SK-N-SH (cell line): ENCODE measurements at regions of chr16 and their contacts with region 1.

Region 1: DNA sequence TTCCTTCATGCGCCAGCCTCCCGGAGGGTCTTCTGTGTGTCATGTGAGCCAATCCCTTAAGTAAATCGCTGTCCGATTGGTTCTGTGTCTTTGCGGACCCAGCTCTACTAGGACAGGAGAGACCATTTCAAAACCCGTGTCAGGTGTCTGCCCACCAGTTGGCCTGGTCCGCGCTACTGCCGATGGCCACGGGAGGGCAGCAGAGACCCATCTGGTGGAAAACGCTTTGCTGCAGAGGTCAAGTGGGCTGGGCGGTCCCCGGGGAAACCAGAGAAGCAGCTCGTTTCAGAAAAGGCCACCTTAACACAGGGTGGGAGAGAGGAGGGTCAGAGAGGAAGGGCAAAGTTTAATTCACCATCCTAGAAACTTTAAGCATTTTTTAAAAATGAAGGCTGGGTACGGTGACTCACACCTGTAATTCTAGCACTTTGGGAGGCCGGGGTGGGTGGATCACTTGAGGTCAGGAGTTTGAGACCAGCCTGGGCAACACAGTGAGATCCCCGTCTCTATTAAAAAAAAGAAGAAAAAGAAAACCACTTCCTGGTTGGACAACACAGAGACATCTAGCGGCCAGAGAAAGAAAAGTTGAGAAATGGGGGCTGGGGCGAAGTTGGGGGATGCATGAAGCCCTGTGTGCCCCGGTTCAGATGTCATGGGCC is 2.8 kb upstream of the CIBAR2 start:
- DNase-seq: peak; percentile 92
- H3K4me3 ChIP-seq: peak overlapping the region in 1 of 2 experiments; percentile 39; a peak in 1 of 4 replicates
- H3K27ac ChIP-seq: peak overlapping the region; percentile 45 to 61; a peak in 3 of 4 replicates
- H3K4me1 ChIP-seq: peaks cover 0 to 11% of the 10 kb centered on the region in 2 experiments; a peak in 2 of 4 replicates
- H3K27me3 ChIP-seq: no peaks in the 10 kb centered on the region
- CTCF ChIP-seq: peak; percentile 98
- EP300 ChIP-seq: no peak
- RAD21 ChIP-seq: peak; percentile 99

Region 2: GRCh38 chr16:84970447-84971127 is 144.5 kb before region 1 on chr16:
- CTCF ChIA-PET with region 1: no interaction called
- POLR2A ChIA-PET with region 1: no interaction called
- DNase-seq: peak; percentile 85
- H3K4me3 ChIP-seq: no peak overlapping the region; a peak in 1 of 4 replicates
- H3K27ac ChIP-seq: no peak overlapping the region
- H3K4me1 ChIP-seq: peaks cover 2 to 4% of the 10 kb centered on the region in 2 experiments; a peak in 1 of 4 replicates
- H3K27me3 ChIP-seq: no peaks in the 10 kb centered on the region
- CTCF ChIP-seq: peak; percentile 97
- EP300 ChIP-seq: no peak
- RAD21 ChIP-seq: peak; percentile 90

Region 3: DNA sequence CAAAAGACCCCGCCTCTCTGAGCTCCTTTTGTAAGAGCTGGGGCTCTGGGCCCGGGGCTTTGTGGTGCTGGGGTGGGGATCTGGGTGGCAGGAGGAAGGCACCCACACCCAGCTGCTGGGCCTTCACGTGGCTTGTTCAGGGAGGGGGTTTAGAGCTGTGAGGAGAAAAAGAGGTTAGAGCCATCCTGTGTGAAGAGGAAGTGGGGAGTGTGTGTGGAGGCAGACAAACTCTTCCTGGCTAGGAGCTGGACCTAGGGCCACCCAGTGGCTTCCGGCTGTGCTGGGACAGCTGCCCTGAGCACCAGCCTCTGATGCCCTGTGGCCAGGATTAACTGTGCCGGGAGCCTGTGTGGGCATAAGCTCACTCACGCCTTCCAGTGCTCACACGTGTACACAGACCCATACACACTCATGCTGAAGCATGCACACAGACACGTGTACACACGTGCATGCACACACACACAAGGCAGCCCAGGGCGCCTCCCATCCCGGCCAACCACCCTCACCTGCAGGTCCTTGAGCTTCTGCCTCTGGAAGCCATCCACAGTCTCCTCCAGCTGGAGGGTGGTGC is 10.1 kb before region 1 on chr16:
- CTCF ChIA-PET with region 1: interaction called, 24 read pairs
- POLR2A ChIA-PET with region 1: no interaction called
- DNase-seq: no peak
- H3K4me3 ChIP-seq: no peak overlapping the region
- H3K27ac ChIP-seq: no peak overlapping the region
- H3K4me1 ChIP-seq: no peaks in the 10 kb centered on the region
- H3K27me3 ChIP-seq: no peaks in the 10 kb centered on the region
- CTCF ChIP-seq: no peak
- EP300 ChIP-seq: no peak
- RAD21 ChIP-seq: no peak

Region 4: DNA sequence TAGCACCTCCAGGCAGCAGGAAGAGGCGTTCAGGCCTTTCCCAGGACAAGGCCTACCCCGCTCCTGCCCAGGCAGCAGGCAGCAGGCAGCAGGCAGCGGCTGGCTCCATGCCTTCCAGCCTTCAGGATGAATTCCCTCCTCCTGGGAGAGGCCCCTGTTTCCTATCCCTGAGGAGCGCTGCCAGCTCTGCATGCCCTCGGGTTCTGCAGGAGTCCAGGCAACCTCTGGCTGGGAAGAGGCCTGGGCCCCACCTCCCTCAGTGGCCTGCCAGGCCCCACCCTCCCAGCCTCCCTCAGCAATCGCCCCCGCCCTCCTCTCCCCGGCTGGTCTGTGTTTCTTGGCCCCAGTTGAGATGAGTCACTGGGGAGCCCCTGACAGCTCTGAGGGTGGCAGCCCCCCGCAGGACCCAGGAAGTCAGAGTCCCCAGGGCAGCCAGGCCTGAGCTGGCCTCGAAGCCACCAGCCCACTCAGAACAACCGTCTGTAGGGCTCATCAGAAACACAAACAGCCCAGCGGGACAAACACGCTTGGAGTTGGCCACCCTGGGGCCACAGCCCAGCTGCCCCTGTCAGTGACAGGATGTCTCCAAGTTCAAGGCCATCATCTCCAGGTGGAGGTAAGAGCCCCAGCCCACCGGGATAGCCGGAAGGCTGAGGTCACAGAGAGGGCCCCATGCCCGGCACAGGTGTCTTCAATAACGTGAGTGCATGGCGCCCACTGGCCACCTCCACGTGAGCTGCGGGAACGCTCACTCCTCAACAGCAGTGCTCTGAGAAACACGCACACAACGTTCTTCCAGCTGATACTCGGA is 36.8 kb after region 1 on chr16:
- CTCF ChIA-PET with region 1: interaction called, 16 read pairs
- POLR2A ChIA-PET with region 1: no interaction called
- DNase-seq: peak; percentile 93
- H3K4me3 ChIP-seq: no peak overlapping the region
- H3K27ac ChIP-seq: peak overlapping the region; percentile 57 to 89
- H3K4me1 ChIP-seq: peaks cover 6 to 54% of the 10 kb centered on the region in 2 experiments
- H3K27me3 ChIP-seq: no peaks in the 10 kb centered on the region
- CTCF ChIP-seq: no peak
- EP300 ChIP-seq: peak; percentile 56 to 83; a peak in 3 of 4 replicates
- RAD21 ChIP-seq: peak; percentile 25; the same call in 1 of the 2 replicates

Region 5: DNA sequence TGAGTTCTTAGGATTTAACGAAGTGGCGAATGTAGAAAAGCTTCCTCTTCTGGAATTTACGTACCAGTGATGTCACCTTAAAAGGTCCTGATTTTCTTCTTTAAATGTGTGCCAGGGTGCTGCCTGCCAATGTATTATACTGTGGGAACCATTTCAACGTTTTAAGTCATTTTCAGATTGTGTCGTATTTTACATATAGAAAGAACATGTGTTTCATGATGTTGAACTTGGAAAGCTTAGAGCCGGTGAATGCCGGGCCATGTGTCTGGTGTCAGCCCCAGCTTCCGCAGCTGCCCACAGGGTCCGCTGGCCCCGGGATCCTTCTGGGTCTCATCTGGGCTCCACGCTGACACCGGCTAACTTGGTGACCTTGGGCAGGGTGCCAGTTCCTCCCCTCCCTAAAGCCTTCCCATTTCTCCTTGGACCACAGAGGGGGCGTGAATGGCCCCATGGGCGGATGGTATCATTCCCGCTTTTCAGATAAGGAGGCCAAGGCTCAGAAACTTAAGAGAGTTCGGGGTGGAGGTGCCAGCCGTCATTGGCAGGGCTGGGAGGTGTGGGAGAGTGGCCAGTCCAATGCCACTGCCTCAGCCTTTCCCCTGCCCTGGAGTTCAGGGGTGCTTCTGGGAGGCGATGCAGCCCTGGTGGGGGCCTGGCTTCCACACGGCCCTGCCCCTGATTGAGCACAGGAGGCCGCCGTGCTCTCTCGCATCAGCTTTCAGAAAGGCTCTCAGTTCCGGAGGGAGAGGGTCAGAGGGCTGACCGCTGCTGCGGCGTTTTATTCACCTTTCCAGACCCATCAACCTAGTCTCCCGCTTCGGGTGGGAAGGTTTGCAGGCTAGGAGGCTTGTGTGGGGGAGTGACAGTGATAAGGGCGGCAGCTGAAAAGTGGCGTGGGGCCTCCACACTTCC is 66.0 kb after region 1 on chr16:
- CTCF ChIA-PET with region 1: interaction called, 75 read pairs
- POLR2A ChIA-PET with region 1: no interaction called
- DNase-seq: no peak
- H3K4me3 ChIP-seq: no peak overlapping the region
- H3K27ac ChIP-seq: no peak overlapping the region; a peak in 1 of 4 replicates
- H3K4me1 ChIP-seq: peaks cover 0 to 52% of the 10 kb centered on the region in 2 experiments; a peak in 2 of 4 replicates
- H3K27me3 ChIP-seq: no peaks in the 10 kb centered on the region
- CTCF ChIP-seq: no peak
- EP300 ChIP-seq: no peak
- RAD21 ChIP-seq: no peak

Region 6: GRCh38 chr16:85220125-85220839 is 105.2 kb after region 1 on chr16:
- CTCF ChIA-PET with region 1: interaction called, 16 read pairs
- POLR2A ChIA-PET with region 1: no interaction called
- DNase-seq: peak; percentile 92
- H3K4me3 ChIP-seq: peak overlapping the region; percentile 15 to 37
- H3K27ac ChIP-seq: peak overlapping the region; percentile 77 to 93
- H3K4me1 ChIP-seq: peaks cover 8 to 51% of the 10 kb centered on the region in 2 experiments
- H3K27me3 ChIP-seq: no peaks in the 10 kb centered on the region
- CTCF ChIP-seq: no peak
- EP300 ChIP-seq: peak; percentile 66 to 71; a peak in 2 of 4 replicates
- RAD21 ChIP-seq: no peak; the same call in 1 of the 2 replicates

Region 7: DNA sequence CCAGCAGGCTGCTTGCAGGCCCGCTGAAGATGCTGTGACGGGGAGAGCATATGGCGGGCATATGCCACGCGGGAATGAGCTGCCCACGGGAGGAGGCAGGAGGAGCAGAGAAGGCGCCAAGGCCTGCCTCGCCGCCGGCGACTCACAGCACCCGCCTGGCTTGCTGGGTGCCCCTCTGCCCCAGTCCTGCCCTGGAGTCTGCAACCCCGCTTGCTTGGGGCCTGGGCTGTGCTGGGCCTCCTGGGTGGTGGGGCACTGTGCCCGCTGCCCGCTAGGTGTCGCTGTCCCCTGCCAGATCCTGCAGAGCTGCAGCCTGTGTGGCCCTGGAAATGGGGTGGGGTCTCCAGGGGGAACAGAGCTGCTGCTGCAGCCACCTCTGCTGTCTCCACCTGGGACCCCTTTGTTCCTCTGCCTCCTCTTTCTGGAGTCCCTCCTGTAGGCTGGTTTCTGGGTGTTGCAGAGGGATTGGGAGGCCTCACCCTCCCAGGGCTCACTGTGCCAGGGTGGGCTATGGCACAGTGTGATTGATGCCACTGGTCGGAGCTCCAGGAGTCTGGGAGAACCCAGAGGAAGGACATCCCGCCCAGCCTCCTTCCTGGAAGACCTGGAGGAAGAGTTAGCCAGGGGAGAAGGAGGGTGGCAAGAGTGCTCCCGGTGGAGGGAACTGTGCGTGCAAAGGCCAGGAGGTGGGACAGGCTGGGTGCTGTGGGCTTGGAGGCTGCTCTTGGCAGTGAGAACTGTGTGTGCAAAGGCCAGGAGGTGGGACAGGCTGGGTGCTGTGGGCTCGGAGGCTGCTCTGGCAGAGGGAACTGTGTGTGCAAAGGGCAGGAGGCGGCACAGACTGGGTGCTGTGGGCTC is 138.3 kb after region 1 on chr16:
- CTCF ChIA-PET with region 1: interaction called, 26 read pairs
- POLR2A ChIA-PET with region 1: no interaction called
- DNase-seq: peak; percentile 93
- H3K4me3 ChIP-seq: no peak overlapping the region; a peak in 1 of 4 replicates
- H3K27ac ChIP-seq: peak overlapping the region in 1 of 2 experiments; percentile 60; a peak in 2 of 4 replicates
- H3K4me1 ChIP-seq: peaks cover 0 to 55% of the 10 kb centered on the region in 2 experiments; a peak in 1 of 4 replicates
- H3K27me3 ChIP-seq: no peaks in the 10 kb centered on the region
- CTCF ChIP-seq: peak; percentile 94
- EP300 ChIP-seq: no peak
- RAD21 ChIP-seq: peak; percentile 77

Region 8: GRCh38 chr16:85615852-85616606 is 501.0 kb after region 1 on chr16:
- CTCF ChIA-PET with region 1: interaction called, 10 read pairs
- POLR2A ChIA-PET with region 1: no interaction called
- DNase-seq: peak; percentile 86
- H3K4me3 ChIP-seq: peak overlapping the region; percentile 42 to 86; a peak in 2 of 4 replicates
- H3K27ac ChIP-seq: peak overlapping the region in 1 of 2 experiments; percentile 97; a peak in 2 of 4 replicates
- H3K4me1 ChIP-seq: peaks cover 9 to 64% of the 10 kb centered on the region in 2 experiments
- H3K27me3 ChIP-seq: no peaks in the 10 kb centered on the region
- CTCF ChIP-seq: peak; percentile 91
- EP300 ChIP-seq: no peak
- RAD21 ChIP-seq: peak; percentile 65